ENCODE measurements at regions of chr9 and their contacts with region 1.

Region 1: DNA sequence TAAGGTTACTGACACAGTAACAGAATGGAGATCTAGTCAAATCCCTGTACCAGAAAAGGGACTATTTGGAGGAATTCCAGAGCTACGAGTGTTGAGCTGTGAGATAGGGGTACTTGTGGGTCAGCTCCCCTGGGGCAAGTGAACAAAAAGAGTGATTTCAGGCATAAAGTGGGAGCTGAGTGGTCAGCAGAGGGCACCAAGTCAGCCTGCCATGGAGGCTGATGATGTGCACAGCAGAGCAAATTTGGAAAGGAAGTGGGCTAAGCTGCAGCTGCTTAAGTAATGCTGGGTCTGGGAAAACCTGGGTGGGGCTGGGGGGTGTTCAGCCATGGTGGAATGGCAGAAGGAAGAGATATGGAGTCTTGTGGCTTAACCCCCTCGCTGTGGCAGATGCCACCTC is 327.9 kb downstream of the NTRK2 start:
- DNase-seq: no peak
- ATAC-seq: peak; percentile 49; the same call in 2 of the 3 replicates
- H3K4me3 ChIP-seq: no peak overlapping the region
- H3K27ac ChIP-seq: no peak overlapping the region
- H3K4me1 ChIP-seq: no peaks in the 10 kb centered on the region
- H3K27me3 ChIP-seq: no peaks in the 10 kb centered on the region; a peak in 1 of 4 replicates
- CTCF ChIP-seq: peak in 2 of 3 experiments; percentile 5 to 27; a peak in 3 of 6 replicates
- EP300 ChIP-seq: no peak
- POLR2A ChIP-seq: no peak
- RAD21 ChIP-seq: peak; percentile 41

Region 2: GRCh38 chr9:85009251-85009650 is 11.8 kb after region 1 on chr9:
- CTCF ChIA-PET with region 1: interaction called, 7 read pairs
- POLR2A ChIA-PET with region 1: no interaction called
- RAD21 ChIA-PET with region 1: interaction called, 7 read pairs
- SMC1A ChIA-PET with region 1: interaction called, 14 read pairs
- in situ Hi-C with region 1: no loop called
- intact Hi-C with region 1: no loop called
- DNase-seq: peak; percentile 4
- ATAC-seq: peak; percentile 85
- H3K4me3 ChIP-seq: no peak overlapping the region
- H3K27ac ChIP-seq: no peak overlapping the region
- H3K4me1 ChIP-seq: peaks cover 9% of the 10 kb centered on the region
- H3K27me3 ChIP-seq: 0 out of 4 replicates have a peak, but pooled peaks cover 0 to 2% of the 10 kb centered on the region in 2 experiments
- CTCF ChIP-seq: peak in 1 of 3 experiments; percentile 19; a peak in 1 of 6 replicates
- EP300 ChIP-seq: no peak; a peak in 1 of 4 replicates
- POLR2A ChIP-seq: no peak
- RAD21 ChIP-seq: no peak

Region 3: DNA sequence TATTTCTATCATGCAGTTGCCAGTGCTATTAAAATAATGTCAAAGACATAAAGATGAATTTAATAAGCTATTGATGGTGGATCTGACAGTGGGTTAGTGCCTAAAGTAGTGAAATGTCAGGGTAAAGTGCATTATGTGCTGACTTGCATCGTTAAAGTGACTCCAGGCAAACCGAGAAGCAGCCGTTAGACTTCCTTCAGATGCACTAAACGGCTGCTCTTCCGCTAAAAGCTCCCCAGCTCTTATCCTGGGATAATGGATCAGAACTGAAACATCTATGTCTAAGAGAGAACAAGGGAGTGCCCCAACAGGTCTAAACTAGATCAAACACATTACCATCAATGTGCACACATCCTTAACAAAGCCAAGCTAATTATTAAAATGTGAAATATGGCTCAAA is 140.2 kb after region 1 on chr9:
- CTCF ChIA-PET with region 1: interaction called, 38 read pairs
- POLR2A ChIA-PET with region 1: no interaction called
- RAD21 ChIA-PET with region 1: interaction called, 18 read pairs
- SMC1A ChIA-PET with region 1: interaction called, 33 read pairs
- in situ Hi-C with region 1: no loop called
- intact Hi-C with region 1: no loop called
- DNase-seq: no peak
- ATAC-seq: no peak
- H3K4me3 ChIP-seq: no peak overlapping the region
- H3K27ac ChIP-seq: no peak overlapping the region
- H3K4me1 ChIP-seq: no peaks in the 10 kb centered on the region; the same call in 1 of the 2 replicates
- H3K27me3 ChIP-seq: no peaks in the 10 kb centered on the region; a peak in 1 of 4 replicates
- CTCF ChIP-seq: no peak
- EP300 ChIP-seq: no peak
- POLR2A ChIP-seq: no peak
- RAD21 ChIP-seq: no peak

Measured in GM12878 (cell line).